GM12878 (cell line): ENCODE measurements at regions of chr10 and their contacts with region 1.

Region 1: GRCh38 chr10:91242940-91243339 is 22.5 kb downstream of the PCGF5 start:
- DNase-seq: no peak
- ATAC-seq: peak; percentile 75
- H3K4me3 ChIP-seq: no peak overlapping the region
- H3K27ac ChIP-seq: no peak overlapping the region
- H3K4me1 ChIP-seq: peaks cover 19% of the 10 kb centered on the region
- H3K27me3 ChIP-seq: no peaks in the 10 kb centered on the region
- CTCF ChIP-seq: no peak
- EP300 ChIP-seq: no peak
- POLR2A ChIP-seq: no peak
- RAD21 ChIP-seq: no peak

Region 2: GRCh38 chr10:91227576-91227975 is 15.4 kb before region 1 on chr10:
- CTCF ChIA-PET with region 1: interaction called, 5 read pairs
- POLR2A ChIA-PET with region 1: interaction called, 11 read pairs
- RAD21 ChIA-PET with region 1: interaction called, 3 read pairs
- SMC1A ChIA-PET with region 1: interaction called, 47 read pairs
- in situ Hi-C with region 1: no loop called
- intact Hi-C with region 1: no loop called
- DNase-seq: no peak
- ATAC-seq: peak; percentile 71
- H3K4me3 ChIP-seq: no peak overlapping the region
- H3K27ac ChIP-seq: no peak overlapping the region
- H3K4me1 ChIP-seq: peaks cover 8% of the 10 kb centered on the region
- H3K27me3 ChIP-seq: no peaks in the 10 kb centered on the region
- CTCF ChIP-seq: no peak
- EP300 ChIP-seq: no peak
- POLR2A ChIP-seq: no peak
- RAD21 ChIP-seq: no peak

Region 3: DNA sequence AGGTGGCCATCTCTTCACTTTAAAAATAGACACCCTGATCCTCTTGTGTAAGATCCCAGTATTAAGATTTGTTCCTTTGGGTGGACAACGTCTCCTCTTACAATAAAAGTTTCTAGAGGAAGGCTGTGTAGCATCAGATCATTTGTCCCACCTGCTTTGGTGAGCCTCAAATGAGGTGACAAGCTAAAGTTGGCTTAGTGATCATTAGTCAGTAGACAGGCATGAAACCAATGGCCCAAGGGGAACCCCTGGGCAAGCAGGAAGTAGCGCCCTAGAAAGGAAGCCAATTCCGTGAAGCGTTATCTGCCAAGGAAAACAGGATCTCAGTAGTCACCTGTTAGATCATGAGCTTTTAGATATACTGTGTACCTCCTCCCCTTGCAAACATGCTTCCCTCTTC is 44.3 kb after region 1 on chr10:
- CTCF ChIA-PET with region 1: no interaction called
- POLR2A ChIA-PET with region 1: no interaction called
- RAD21 ChIA-PET with region 1: no interaction called
- SMC1A ChIA-PET with region 1: no interaction called
- in situ Hi-C with region 1: no loop called
- intact Hi-C with region 1: no loop called
- DNase-seq: no peak
- ATAC-seq: no peak
- H3K4me3 ChIP-seq: no peak overlapping the region
- H3K27ac ChIP-seq: no peak overlapping the region
- H3K4me1 ChIP-seq: no peaks in the 10 kb centered on the region
- H3K27me3 ChIP-seq: no peaks in the 10 kb centered on the region
- CTCF ChIP-seq: no peak
- EP300 ChIP-seq: no peak
- POLR2A ChIP-seq: no peak
- RAD21 ChIP-seq: no peak

Region 4: DNA sequence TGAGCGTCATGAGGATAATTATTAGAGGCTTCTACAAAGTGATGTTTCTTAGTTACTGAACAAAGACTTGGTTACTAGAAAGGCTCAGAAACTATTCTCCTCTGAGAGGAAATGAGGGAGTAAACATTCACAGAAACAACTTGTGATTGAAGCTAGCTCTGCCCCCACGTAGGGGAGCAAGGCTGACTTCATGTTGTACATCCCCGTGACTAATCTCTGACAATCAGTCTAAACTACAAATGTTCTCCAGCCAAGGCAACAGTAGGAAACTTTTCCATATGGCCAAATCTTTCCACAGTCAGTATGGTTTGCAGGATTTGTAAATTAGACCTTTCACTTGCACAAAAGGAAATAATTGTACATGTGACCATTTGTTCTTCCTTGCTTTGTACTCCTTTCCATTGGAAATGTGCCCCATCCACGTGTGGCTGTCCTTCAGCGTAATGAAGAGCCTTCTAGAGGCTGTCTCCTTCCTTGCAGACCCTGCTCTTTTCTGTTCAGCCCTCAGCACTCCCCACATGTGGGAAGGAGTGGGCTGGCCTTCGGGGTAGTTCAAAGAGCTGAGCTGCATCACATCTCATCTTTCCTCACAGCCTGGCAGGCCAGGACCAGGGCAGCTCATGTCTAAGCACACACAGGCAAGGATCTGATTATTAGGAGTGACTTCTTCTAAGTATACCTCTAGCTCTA is 71.0 kb after region 1 on chr10:
- CTCF ChIA-PET with region 1: no interaction called
- POLR2A ChIA-PET with region 1: no interaction called
- RAD21 ChIA-PET with region 1: no interaction called
- SMC1A ChIA-PET with region 1: no interaction called
- in situ Hi-C with region 1: no loop called
- intact Hi-C with region 1: no loop called
- DNase-seq: no peak
- ATAC-seq: peak; percentile 73
- H3K4me3 ChIP-seq: no peak overlapping the region
- H3K27ac ChIP-seq: no peak overlapping the region
- H3K4me1 ChIP-seq: no peaks in the 10 kb centered on the region
- H3K27me3 ChIP-seq: peaks cover 0 to 3% of the 10 kb centered on the region in 2 experiments; a peak in 2 of 4 replicates
- CTCF ChIP-seq: no peak
- EP300 ChIP-seq: no peak
- POLR2A ChIP-seq: no peak
- RAD21 ChIP-seq: no peak

Region 5: DNA sequence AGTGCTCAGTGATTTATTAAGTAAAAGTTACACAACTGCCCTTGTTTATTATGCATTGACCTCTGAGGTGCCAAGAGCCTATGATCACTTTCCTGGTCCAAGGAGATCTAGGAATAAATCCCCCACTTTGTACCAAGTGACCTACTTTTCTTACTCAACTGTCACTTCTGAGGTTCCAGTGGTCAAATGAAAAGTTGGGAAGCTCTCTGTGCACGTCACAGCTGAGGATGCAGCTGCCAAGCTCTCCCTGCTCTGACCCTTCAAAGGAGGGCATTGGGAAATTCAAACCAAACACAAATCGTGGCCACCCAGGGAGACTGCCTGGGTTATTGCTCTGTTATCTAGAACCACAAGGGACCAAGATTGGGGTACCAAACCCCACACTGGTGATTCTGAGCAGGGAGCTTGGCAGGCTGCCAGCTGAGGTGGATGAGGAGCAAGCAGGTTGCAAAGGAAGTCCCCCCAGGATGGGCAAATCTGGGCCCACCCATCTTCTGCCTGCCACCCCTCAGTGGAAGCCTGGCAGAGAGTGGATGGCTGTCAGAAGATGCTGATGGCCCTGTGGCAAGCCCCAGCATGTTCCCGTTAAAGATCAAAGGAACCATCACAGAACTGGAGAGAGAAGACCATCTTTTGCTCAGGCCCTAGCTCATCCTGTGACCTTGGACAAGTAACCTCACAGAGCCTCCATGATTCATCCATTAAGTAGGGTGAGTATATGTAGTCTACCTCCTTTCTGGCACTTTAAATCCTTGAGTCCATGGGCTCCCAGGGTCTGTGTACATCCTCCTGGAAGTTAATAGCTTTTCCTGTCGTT is 283.2 kb after region 1 on chr10:
- CTCF ChIA-PET with region 1: no interaction called
- POLR2A ChIA-PET with region 1: no interaction called
- RAD21 ChIA-PET with region 1: no interaction called
- SMC1A ChIA-PET with region 1: no interaction called
- in situ Hi-C with region 1: no loop called
- intact Hi-C with region 1: no loop called
- DNase-seq: no peak
- ATAC-seq: no peak
- H3K4me3 ChIP-seq: no peak overlapping the region
- H3K27ac ChIP-seq: no peak overlapping the region
- H3K4me1 ChIP-seq: no peaks in the 10 kb centered on the region
- H3K27me3 ChIP-seq: no peaks in the 10 kb centered on the region; a peak in 2 of 4 replicates
- CTCF ChIP-seq: no peak
- EP300 ChIP-seq: no peak
- POLR2A ChIP-seq: no peak
- RAD21 ChIP-seq: no peak